ENCODE measurements at regions of chr2 and their contacts with region 1.

Region 1: DNA sequence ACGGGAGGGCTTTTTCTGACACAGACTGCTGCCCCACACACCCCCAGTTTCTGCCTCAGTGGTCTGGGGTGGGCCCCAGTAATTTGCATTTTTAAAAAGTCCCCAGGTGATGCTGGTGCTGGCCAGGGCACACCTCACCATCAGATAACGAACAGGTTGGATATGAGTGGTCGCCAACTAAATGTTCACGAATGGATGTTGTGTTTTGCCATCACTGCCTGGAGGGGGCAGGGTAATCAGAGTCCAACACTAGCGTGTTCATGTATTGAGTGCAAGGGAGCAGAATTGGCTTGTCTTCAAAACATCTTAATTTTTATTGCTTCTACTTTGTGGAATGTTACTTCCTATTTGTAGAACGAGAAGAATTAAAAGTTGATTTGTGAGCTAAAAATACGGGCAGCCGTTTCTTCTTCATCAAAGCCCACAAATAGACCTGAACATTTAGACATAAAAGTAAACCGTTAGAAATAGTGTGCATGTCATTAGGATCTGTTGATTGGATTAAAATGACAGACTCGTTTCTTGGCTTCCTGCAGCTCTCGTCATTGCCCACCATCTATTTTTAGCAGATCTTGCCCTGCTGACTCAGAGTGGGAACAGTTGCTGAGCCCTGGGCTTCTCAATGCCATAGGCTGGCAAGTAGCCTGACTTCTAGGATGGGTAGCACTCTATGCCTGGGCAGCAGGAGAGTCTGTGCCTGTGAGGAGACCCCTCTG is 45.2 kb downstream of the NCK2 start:
- DNase-seq: peak; percentile 46
- CTCF ChIP-seq: peak; percentile 43

Region 2: DNA sequence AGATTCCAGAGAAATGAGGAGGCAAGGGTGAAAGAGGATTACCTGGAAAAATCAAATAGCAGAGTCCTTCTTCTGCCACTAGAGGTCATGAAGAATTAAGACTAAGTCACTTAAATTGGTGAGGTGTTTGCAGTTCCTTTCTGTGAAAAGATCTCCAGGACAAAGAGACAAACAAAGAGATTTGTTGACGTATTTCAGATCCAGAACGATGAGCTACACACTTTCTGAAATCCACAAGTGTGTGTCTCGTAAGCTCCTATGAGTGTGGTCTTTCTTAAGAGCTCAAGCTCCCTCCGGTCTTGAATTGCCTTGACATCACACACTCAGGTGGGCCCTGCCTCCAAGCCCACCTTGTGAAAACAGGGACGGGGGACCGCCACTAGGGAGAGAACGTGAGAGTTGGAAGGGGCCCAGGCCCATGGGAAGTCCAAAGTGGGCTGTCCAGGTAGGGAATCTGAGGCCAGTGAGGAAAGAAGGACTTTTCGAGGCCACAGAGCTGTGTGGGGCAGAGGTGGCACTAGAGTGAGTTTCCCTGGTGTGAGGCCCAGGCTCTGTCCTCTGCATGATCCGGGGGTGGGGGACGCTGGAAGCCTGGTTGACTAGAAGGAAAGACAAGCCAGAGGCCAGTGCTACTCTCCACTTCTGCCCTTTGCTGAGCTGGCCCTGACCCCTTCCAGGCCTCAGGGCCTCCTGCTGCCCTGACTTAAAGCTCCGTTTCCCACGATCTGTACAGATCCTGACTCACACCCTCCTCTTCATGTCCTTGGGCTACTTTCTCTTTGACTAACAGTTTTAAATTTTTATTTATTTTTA is 213.3 kb before region 1 on chr2:
- CTCF ChIA-PET with region 1: interaction called, 12 read pairs
- POLR2A ChIA-PET with region 1: no interaction called
- DNase-seq: peak; percentile 59
- CTCF ChIP-seq: peak; percentile 61

Region 3: DNA sequence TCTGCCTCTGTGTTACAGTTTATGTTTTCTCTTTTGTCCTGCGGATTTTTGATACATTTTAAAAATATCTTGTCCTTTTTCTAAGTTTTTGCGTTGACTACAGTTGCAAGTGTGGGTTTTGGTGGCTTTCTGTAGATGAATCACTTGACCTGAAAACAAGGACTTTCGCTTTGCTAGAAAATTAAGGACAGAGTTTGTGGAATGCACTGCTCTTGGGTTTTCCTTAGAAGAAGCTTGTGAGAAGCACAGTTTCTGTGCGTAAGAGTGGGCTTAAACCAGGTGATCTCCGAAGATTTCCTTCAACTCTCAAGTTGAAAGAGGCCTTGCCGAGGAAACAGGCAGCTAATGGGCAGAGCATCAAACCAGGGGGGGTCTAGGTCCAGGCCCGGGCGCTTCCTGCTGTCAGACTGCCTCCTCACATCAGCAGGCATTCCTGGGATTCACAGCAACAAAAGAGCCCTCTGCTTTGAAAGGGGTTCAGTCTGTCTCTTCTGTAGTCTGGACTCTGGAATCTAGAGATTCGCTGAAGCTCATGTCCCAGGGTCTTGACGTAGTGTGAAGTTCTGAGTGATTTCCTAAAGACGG is 27.9 kb before region 1 on chr2:
- CTCF ChIA-PET with region 1: interaction called, 13 read pairs
- POLR2A ChIA-PET with region 1: no interaction called
- DNase-seq: no peak
- CTCF ChIP-seq: no peak

Region 4: DNA sequence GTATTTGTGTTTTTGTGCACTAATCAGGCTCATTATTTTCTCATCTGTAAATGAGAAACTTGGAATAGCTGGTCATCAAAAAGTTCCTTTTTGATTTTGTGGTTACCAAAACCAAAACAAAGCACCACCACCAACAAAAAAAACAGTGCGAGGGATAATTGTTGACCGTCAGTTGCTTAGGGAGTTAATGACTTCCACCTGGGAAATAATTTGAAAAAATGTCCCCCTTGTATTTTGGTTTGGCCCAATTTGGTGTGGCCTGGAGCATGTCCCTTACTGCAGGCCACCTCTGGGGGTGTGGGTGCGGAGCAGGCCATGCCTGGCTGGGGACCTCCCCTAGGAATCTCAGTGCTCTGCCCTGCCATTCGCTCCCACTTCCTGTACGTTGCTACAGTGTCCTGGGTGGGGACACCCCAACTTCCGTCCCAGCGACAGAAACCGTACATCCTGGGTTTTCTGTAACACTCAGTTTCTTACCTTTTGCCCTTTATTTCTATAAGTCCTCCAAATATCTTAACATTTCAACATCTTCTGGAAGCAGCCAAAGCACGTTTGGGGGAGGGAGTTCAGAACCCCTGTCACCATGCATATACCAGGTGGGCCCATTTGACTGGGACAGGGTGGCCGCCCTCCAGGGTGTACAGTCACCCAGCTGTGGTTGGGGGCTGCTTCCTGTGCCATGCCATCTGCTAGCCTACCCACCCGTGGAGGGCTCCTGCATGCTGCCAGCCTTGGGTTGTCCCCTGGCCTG is 13.9 kb before region 1 on chr2:
- CTCF ChIA-PET with region 1: interaction called, 24 read pairs
- POLR2A ChIA-PET with region 1: no interaction called
- DNase-seq: no peak
- CTCF ChIP-seq: no peak